Mammary epithelial cell (primary cell): ENCODE measurements at regions of chr21 and their contacts with region 1.

Region 1: GRCh38 chr21:26587736-26588201 is 14.7 kb upstream of the CYYR1 start:
- DNase-seq: peak; percentile 5
- H3K4me3 ChIP-seq: no peak overlapping the region
- H3K27ac ChIP-seq: no peak overlapping the region
- H3K4me1 ChIP-seq: no peaks in the 10 kb centered on the region
- H3K27me3 ChIP-seq: no peaks in the 10 kb centered on the region
- CTCF ChIP-seq: no peak

Region 2: DNA sequence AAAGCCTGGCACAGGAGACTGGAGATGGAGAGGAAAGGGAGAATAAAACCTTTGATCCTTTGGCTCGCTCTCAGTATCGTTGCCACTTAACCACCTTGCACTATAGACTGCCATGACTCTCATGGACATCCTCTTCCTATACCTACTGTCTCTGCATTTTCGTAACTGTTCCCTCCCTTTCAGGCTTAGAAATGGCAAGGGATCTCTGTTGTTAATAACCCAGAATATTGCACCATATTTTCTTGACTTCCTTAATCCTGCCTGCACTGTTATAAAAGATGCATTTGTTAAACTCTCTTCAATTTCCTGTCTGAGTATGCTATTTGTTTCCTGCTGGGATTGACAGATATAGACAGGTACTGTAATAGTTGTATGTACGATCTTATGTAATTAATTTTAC is 53.3 kb before region 1 on chr21:
- CTCF ChIA-PET with region 1: no interaction called
- dilution Hi-C with region 1: loop called (anchors 5 kb)
- in situ Hi-C with region 1: no loop called
- intact Hi-C with region 1: no loop called
- DNase-seq: no peak
- H3K4me3 ChIP-seq: no peak overlapping the region
- H3K27ac ChIP-seq: no peak overlapping the region
- H3K4me1 ChIP-seq: no peaks in the 10 kb centered on the region
- H3K27me3 ChIP-seq: no peaks in the 10 kb centered on the region
- CTCF ChIP-seq: no peak